ENCODE measurements at regions of chr5 and their contacts with region 1.

Region 1: GRCh38 chr5:151126199-151126645 is 31.4 kb downstream of the ANXA6 start:
- DNase-seq: peak; percentile 39 to 78 (median 62)
- ATAC-seq: peak; percentile 25 to 48
- H3K4me3 Mint-ChIP-seq: peak overlapping the region in 8 of 10 donors; percentile 7 to 73 (median 30)
- H3K27ac Mint-ChIP-seq: peak overlapping the region; percentile 67 to 98 (median 94)
- H3K4me1 Mint-ChIP-seq: peaks cover 32 to 75% (median 68%) of the 10 kb centered on the region in 4 donors
- H3K27me3 Mint-ChIP-seq: no peaks in the 10 kb centered on the region

Region 2: DNA sequence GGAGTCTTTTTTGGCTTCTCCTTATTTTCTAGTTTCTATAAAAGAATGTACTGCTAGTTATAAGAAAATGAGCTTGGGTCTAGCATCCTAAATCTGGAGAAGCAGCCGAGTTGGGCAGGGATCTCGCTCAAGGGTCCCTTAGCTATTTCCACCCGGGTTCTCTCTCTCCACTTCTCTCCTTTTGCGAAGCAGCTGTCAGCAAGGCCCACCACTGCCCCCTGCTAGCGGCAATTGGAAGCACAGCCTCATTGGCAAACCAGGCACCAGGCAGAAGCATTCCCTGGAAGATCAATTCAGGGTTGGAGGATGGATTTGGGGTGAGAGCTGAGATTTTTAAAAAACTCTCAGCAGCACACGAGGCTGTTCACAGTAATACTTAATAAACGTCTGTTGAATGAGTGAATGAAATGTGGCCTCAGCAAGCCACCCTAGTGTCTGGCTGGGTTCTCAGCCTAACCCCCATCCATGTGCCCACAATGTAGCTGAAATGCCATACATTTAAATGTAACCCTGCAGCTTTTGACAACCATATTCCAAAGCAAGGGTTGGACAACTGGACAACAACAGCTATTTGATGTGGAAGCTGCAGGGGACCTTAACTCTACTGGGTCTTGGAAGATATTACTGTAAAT is 10.8 kb before region 1 on chr5:
- POLR2A ChIA-PET with region 1: interaction called, 14 read pairs
- DNase-seq: peak; percentile 48 to 82 (median 64)
- ATAC-seq: peak; percentile 68 to 93
- H3K4me3 Mint-ChIP-seq: no peak overlapping the region
- H3K27ac Mint-ChIP-seq: peak overlapping the region in 7 of 10 donors; percentile 37 to 53 (median 44)
- H3K4me1 Mint-ChIP-seq: peaks cover 7 to 17% (median 12%) of the 10 kb centered on the region in 4 donors
- H3K27me3 Mint-ChIP-seq: no peaks in the 10 kb centered on the region

Region 3: GRCh38 chr5:151141535-151141934 is 15.3 kb after region 1 on chr5:
- POLR2A ChIA-PET with region 1: interaction called, 54 read pairs
- DNase-seq: peak; percentile 37 to 80 (median 55)
- ATAC-seq: peak; percentile 80 to 81
- H3K4me3 Mint-ChIP-seq: peak overlapping the region; percentile 80 to 94 (median 92)
- H3K27ac Mint-ChIP-seq: peak overlapping the region; percentile 91 to 99 (median 95)
- H3K4me1 Mint-ChIP-seq: peaks cover 67 to 99% (median 98%) of the 10 kb centered on the region in 4 donors
- H3K27me3 Mint-ChIP-seq: no peaks in the 10 kb centered on the region

Region 4: GRCh38 chr5:151150471-151151262 is 24.4 kb after region 1 on chr5:
- POLR2A ChIA-PET with region 1: interaction called, 88 read pairs
- DNase-seq: peak; percentile 61 to 92 (median 82)
- ATAC-seq: peak; percentile 79 to 93
- H3K4me3 Mint-ChIP-seq: peak overlapping the region; percentile 71 to 95 (median 82)
- H3K27ac Mint-ChIP-seq: peak overlapping the region; percentile 94 to 100 (median 98)
- H3K4me1 Mint-ChIP-seq: peaks cover 53 to 100% (median 97%) of the 10 kb centered on the region in 4 donors
- H3K27me3 Mint-ChIP-seq: no peaks in the 10 kb centered on the region

Region 5: DNA sequence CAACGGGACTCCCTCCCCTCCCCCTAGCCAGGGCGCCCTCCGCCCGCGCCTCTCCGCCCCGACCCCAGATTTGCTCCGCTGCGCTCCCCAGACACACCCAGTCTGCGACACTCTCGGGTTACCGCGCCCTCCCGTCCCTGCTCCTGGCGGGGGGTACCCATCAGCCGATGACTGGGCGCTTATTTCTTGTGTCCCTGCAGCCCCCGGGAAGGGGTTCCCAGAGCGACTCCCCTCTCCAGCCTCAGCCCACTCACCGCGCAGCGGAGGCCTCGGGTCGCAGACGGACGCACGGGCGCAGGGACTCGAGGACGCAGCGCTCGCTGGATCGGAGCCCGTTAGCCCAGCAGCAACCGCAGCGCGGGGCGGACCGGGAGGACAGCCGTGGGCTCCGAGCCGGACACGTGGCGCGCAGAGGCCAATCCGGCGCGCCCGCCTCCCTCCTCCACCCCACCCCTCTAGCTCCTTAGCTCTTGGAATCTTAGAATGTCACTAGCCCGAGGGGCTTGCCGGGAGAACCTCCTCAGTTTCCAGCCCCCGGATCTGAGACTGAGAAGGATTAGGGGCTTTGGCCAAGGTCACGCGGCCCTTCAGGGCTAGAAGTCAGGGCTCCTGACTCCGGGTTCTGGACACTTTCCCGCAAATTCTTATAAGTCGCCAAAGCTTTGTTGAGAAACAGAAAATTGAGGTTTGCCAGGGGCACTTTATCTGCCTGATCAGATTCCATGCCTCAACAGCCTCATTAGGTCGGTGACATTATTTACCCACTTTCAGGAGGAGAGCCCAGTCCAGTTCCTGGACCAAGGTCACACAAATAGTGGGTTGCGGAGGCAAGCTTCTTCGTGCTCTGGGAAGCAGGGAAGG is 31.4 kb after region 1 on chr5 and contains the start of gene ANXA6:
- POLR2A ChIA-PET with region 1: interaction called, 88 read pairs
- DNase-seq: peak; percentile 24 to 76 (median 60)
- ATAC-seq: peak; percentile 75 to 76
- H3K4me3 Mint-ChIP-seq: peak within 1 kb of the TSS; percentile 93 to 99 (median 95)
- H3K27ac Mint-ChIP-seq: peak within 1 kb of the TSS; percentile 94 to 99 (median 96)
- H3K4me1 Mint-ChIP-seq: peaks cover 38 to 69% (median 60%) of the 10 kb centered on the region in 4 donors
- H3K27me3 Mint-ChIP-seq: no peaks in the 10 kb centered on the region
- polyA plus RNA-seq, gene ANXA6: 242 to 318 (median 254) TPM

Region 6: GRCh38 chr5:151164686-151165392 is 38.6 kb after region 1 on chr5:
- POLR2A ChIA-PET with region 1: interaction called, 60 read pairs
- DNase-seq: peak; percentile 56 to 90 (median 82)
- ATAC-seq: peak; percentile 94 to 99
- H3K4me3 Mint-ChIP-seq: peak overlapping the region in 2 of 10 donors; percentile 3 to 14
- H3K27ac Mint-ChIP-seq: peak overlapping the region; percentile 11 to 85 (median 66)
- H3K4me1 Mint-ChIP-seq: peaks cover 14 to 37% (median 33%) of the 10 kb centered on the region in 4 donors
- H3K27me3 Mint-ChIP-seq: no peaks in the 10 kb centered on the region

Measured in naive thymus-derived CD8-positive, alpha-beta T cell (primary cell).